ENCODE measurements at regions of chr14 and their contacts with region 1.

Region 1: GRCh38 chr14:103899316-103899715 is 28.9 kb upstream of the TDRD9 start:
- DNase-seq: no peak
- H3K4me3 Mint-ChIP-seq: no peak overlapping the region
- H3K27ac Mint-ChIP-seq: no peak overlapping the region
- H3K4me1 Mint-ChIP-seq: peaks cover 4% of the 10 kb centered on the region
- H3K27me3 Mint-ChIP-seq: peaks cover 5% of the 10 kb centered on the region

Region 2: GRCh38 chr14:103920981-103921854 is 21.9 kb after region 1 on chr14:
- CTCF ChIA-PET with region 1: interaction called, 11 read pairs
- DNase-seq: peak; percentile 95
- H3K4me3 Mint-ChIP-seq: peak overlapping the region; percentile 88
- H3K27ac Mint-ChIP-seq: peak overlapping the region; percentile 73
- H3K4me1 Mint-ChIP-seq: peaks cover 14% of the 10 kb centered on the region
- H3K27me3 Mint-ChIP-seq: peaks cover 27% of the 10 kb centered on the region

Region 3: GRCh38 chr14:104026024-104026423 is 126.7 kb after region 1 on chr14:
- CTCF ChIA-PET with region 1: no interaction called
- DNase-seq: no peak
- H3K4me3 Mint-ChIP-seq: no peak overlapping the region
- H3K27ac Mint-ChIP-seq: no peak overlapping the region
- H3K4me1 Mint-ChIP-seq: no peaks in the 10 kb centered on the region
- H3K27me3 Mint-ChIP-seq: peaks cover 26% of the 10 kb centered on the region